Uterus (tissue), 4 donors: ENCODE measurements at regions of chr21 and their contacts with region 1.

Region 1: DNA sequence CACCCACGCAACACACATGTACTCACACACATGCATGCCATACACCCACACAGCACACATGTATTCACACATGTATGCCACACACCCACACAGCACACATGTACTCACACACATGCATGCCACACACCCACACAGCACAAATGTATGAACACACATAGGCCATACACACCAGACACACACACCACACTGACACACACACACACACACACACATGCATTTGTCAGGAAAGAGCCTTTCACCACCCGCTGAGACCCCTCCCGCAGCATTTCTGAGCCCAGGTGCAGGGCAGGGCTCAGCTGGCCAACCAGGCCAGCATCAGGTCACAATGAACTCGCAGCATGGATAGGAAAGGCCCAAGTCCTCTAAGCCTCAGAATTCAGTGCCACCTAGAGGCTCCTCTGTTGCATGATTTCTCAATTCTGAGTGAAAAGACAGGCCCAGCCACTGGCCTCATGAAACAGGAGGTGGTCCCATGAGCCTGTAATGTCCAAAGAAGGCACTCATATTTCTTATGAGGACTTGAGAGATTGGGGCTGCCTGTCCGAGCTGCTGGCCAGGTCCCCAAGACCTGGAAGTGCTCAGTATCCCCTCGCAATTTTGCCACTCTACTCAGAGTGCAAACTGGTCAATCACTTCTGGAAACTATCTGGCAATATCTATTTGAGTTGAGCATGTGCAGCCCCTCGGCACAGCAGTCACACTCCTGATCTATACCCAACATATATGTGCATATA is 57.3 kb downstream of the PSMG1 start:
- DNase-seq: peak in 1 of 2 donors; percentile 68
- H3K4me3 ChIP-seq: no peak overlapping the region
- H3K27ac ChIP-seq: peak overlapping the region in 1 of 2 donors; percentile 28
- H3K4me1 ChIP-seq: peaks cover 0 to 6% of the 10 kb centered on the region in 2 donors
- H3K27me3 ChIP-seq: no peaks in the 10 kb centered on the region
- CTCF ChIP-seq: peak; percentile 62 to 86 (median 69)
- POLR2A ChIP-seq: no peak

Region 2: GRCh38 chr21:38733973-38734546 is 391.9 kb before region 1 on chr21:
- intact Hi-C with region 1: loop called (anchors 5 kb)
- DNase-seq: peak; percentile 91
- H3K4me3 ChIP-seq: peak overlapping the region; percentile 4 to 30
- H3K27ac ChIP-seq: peak overlapping the region; percentile 61 to 70
- H3K4me1 ChIP-seq: no peaks in the 10 kb centered on the region
- H3K27me3 ChIP-seq: no peaks in the 10 kb centered on the region
- CTCF ChIP-seq: peak; percentile 85 to 97 (median 93)
- POLR2A ChIP-seq: peak; percentile 10 to 21

Region 3: GRCh38 chr21:38805328-38806152 is 320.4 kb before region 1 on chr21 and contains the start of gene ETS2:
- intact Hi-C with region 1: loop called (anchors 5 kb)
- DNase-seq: peak; percentile 90 to 92
- H3K4me3 ChIP-seq: peak within 1 kb of the TSS; percentile 68 to 100
- H3K27ac ChIP-seq: peak within 1 kb of the TSS; percentile 94 to 98
- H3K4me1 ChIP-seq: no peaks in the 10 kb centered on the region
- H3K27me3 ChIP-seq: no peaks in the 10 kb centered on the region
- CTCF ChIP-seq: peak in 1 of 4 experiments; percentile 36
- POLR2A ChIP-seq: peak; percentile 83 to 95
- total RNA-seq, gene ETS2: 72.6 to 147 (median 98.5) TPM

Region 4: GRCh38 chr21:39184008-39184980 is 58.4 kb after region 1 on chr21:
- intact Hi-C with region 1: no loop called
- DNase-seq: no peak
- H3K4me3 ChIP-seq: peak overlapping the region; percentile 76 to 83
- H3K27ac ChIP-seq: peak overlapping the region; percentile 94 to 95
- H3K4me1 ChIP-seq: no peaks in the 10 kb centered on the region
- H3K27me3 ChIP-seq: no peaks in the 10 kb centered on the region
- CTCF ChIP-seq: no peak
- POLR2A ChIP-seq: peak in 1 of 2 donors; percentile 9

Region 5: DNA sequence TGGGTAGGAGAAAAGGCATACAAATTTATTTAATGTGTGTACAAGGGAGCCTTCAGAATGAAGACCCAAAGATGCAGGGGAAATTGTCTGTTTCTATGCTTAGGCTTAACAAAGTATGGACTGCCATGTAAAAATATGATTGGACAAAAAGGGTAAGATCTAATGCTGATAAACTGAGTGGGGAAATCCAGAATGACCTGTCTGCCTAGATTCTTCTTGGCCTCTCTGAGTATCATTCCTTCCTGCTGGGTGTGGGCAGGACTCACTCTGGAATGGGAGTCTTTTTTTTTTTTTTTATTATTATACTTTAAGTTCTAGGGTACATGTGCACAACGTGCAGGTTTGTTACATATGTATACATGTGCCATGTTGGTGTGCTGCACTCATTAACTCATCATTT is 680.1 kb after region 1 on chr21:
- intact Hi-C with region 1: no loop called
- DNase-seq: no peak
- H3K4me3 ChIP-seq: no peak overlapping the region
- H3K27ac ChIP-seq: no peak overlapping the region
- H3K4me1 ChIP-seq: no peaks in the 10 kb centered on the region
- H3K27me3 ChIP-seq: no peaks in the 10 kb centered on the region
- CTCF ChIP-seq: no peak
- POLR2A ChIP-seq: no peak